ENCODE measurements at regions of chr13 and their contacts with region 1.

Region 1: GRCh38 chr13:51906581-51906980 is 44.8 kb downstream of the CCDC70 start:
- DNase-seq: no peak
- H3K4me3 Mint-ChIP-seq: no peak overlapping the region
- H3K27ac Mint-ChIP-seq: no peak overlapping the region
- H3K4me1 Mint-ChIP-seq: peaks cover 29% of the 10 kb centered on the region
- H3K27me3 Mint-ChIP-seq: no peaks in the 10 kb centered on the region

Region 2: DNA sequence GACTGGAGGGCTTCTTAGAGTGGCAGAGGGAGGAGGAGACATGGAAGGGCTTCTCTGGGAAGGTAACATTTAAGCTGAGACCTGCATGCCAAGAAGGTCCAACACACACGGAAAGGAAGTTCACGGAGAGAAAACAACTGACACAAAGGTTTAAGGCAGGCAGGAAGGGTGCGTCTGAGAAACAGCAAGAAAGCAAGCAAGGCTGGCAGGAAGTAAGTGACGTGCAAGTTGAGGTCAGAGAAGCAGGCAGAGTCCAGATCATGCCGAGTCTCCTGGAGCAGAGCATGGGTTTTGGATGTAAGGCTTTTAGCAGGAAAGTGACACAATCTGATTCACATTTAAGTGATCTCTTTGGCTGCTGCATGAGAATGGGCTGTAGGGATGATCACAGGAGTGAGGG is 44.1 kb after region 1 on chr13:
- CTCF ChIA-PET with region 1: no interaction called
- intact Hi-C with region 1: loop called (anchors 5 kb)
- DNase-seq: peak; percentile 62
- H3K4me3 Mint-ChIP-seq: peak overlapping the region; percentile 32
- H3K27ac Mint-ChIP-seq: peak overlapping the region; percentile 16
- H3K4me1 Mint-ChIP-seq: peaks cover 36% of the 10 kb centered on the region
- H3K27me3 Mint-ChIP-seq: no peaks in the 10 kb centered on the region

Measured in activated naive CD4-positive, alpha-beta T cell treated with anti-CD3 and anti-CD28 coated beads for 36 hours (primary cell).